GM10248 (cell line): ENCODE measurements at regions of chr6 and their contacts with region 1.

Region 1: DNA sequence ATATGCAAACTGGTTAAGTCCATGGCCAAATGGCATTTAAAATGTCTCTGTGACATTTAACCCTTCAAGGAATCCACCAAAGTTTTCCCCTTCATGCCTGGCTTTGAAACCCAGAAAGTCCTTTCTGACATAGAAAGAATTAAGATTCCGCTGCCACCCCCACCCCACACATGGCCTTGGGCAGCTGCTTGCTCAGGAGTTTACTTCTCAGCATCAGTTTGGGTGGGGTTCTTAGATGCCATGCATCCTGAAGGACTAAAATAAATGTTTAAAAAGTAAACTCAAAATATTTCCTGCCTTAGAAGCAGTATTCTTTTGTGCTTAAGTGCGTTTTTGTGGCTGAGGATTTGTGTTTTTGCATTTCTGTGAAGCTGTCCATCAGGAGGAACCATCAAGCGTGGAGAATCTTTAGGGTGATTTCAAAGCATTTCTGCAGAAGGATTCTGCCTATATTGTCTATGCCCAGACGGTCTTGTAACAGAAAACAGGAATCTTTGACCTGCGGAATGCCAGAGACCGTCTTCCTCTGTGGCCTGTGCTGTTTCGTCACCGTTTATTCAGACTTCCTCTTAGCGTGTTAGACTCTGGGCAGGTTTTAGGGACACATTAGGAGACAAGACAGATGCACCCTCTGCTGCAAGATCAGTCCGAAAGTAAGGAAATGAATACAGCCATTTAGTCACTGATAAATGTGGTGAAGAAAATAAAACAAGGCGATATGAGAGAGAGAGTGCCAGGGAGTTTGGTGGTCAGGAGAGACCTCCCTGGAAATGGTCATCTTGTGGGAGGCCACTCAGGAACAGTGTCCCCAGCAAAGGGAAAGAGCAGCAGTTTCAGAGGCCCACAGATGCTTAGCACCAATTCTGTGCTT is 6.2 kb downstream of the DUSP22 start:
- DNase-seq: no peak
- CTCF ChIP-seq: no peak

Region 2: DNA sequence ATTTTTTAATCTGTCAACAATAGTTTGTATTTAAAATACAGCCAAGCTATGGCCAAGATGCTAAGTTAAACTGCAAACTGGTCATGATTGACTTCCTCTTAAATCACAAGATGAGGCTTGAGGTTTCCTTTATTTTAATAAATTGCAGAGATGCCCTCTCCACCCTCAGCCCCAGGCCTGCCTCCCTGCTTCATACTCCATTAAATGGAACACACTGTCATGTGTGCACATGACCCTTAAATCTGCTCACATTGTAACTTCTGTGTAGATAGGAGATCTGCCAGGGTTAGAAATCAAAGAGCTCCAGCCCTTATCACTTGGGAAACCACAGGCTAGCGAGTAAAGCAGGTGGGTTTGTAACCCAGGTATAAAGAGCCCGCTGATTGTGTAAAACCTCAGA is 14.6 kb after region 1 on chr6:
- CTCF ChIA-PET with region 1: interaction called, 23 read pairs
- POLR2A ChIA-PET with region 1: no interaction called
- DNase-seq: no peak
- CTCF ChIP-seq: no peak